ENCODE measurements at regions of chr3 and their contacts with region 1.

Region 1: DNA sequence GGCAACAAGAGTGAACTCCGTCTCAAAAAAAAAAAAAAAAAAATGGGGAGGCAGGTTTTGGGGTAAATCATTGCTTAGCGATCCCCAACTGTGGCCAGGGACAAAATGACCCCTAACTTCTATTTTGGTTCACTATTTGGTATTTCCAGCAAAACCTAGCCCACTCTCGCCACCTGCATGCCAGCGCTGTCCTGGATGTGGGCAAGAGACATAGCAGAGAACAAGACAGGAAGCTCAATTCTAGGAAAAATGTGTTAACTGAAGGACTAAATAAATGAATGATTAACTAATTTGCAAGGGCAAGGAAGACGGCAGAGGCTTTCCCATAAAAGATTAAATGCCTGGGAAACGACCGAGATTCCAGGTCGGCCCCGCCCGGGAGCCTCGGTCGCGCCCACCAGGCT is 425 bp downstream of the NICN1 start:
- DNase-seq: no peak
- ATAC-seq: peak; percentile 2
- H3K4me3 Mint-ChIP-seq: peak overlapping the region; percentile 84
- H3K27ac Mint-ChIP-seq: peak overlapping the region; percentile 93
- H3K4me1 Mint-ChIP-seq: peaks cover 16% of the 10 kb centered on the region
- H3K27me3 Mint-ChIP-seq: no peaks in the 10 kb centered on the region

Region 2: DNA sequence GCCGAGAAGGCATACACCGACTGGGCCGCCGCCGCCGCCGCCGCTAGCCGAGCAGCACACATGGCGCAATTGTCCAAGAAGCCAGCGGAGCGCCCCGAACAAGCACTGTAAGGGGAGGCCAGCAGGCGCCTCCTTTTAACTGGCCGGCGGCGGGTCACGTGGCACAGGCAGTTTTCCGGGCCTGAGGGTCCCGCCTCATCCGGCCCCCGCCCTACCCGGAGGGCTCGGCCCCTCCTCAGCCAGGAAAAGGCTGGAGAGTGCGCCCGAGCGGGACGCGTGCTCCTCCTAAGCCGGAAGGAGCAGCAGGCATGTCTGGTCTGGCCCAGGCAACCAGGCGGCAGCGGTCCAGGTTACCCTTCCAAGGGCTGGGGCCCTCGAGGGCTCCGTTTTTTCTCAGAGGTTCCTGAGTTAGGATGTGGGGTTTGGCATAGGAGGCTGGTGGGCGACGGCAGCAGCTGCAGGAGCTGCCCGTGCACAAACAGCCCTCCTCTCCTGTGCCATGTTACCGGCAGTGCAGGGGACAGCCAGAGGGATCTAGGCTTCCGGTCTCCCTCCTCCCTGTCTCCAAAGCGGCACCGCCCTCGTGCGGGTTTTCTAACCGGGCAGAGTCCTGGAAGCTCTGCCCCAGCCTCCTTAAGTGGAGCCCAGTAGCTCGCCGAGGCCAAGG is 70.3 kb before region 1 on chr3 and contains the start of gene GPX1:
- CTCF ChIA-PET with region 1: no interaction called
- POLR2A ChIA-PET with region 1: interaction called, 3 read pairs
- intact Hi-C with region 1: loop called in 1 of 2 experiments (anchors 1 kb)
- DNase-seq: peak; percentile 92
- ATAC-seq: peak; percentile 85
- H3K4me3 Mint-ChIP-seq: peak within 1 kb of the TSS; percentile 94
- H3K27ac Mint-ChIP-seq: peak within 1 kb of the TSS; percentile 98
- H3K4me1 Mint-ChIP-seq: peaks cover 18% of the 10 kb centered on the region
- H3K27me3 Mint-ChIP-seq: no peaks in the 10 kb centered on the region
- total RNA-seq, gene GPX1: 182 to 306 TPM

Region 3: DNA sequence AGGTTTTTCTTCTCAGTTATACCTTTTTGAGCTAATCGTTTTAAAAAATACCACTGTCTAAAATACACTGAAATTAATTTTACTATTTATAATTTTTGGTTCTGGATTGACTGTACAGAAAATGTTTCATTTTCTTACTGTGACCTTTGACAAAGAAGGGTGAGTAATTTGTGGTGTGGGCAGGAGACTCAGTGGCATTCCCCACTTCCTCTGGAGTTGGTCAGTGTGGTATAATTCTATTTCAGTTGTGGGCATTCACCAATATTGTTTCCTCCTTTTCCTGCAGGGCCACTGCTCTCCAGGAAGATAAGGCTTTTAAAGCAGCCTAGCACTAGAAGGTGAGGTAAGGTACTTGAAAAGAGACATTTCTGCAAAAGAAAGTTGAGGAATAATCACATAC is 47.9 kb after region 1 on chr3:
- CTCF ChIA-PET with region 1: no interaction called
- POLR2A ChIA-PET with region 1: no interaction called
- intact Hi-C with region 1: no loop called
- DNase-seq: peak; percentile 25
- ATAC-seq: peak; percentile 55
- H3K4me3 Mint-ChIP-seq: no peak overlapping the region
- H3K27ac Mint-ChIP-seq: no peak overlapping the region
- H3K4me1 Mint-ChIP-seq: peaks cover 21% of the 10 kb centered on the region
- H3K27me3 Mint-ChIP-seq: no peaks in the 10 kb centered on the region

Region 4: DNA sequence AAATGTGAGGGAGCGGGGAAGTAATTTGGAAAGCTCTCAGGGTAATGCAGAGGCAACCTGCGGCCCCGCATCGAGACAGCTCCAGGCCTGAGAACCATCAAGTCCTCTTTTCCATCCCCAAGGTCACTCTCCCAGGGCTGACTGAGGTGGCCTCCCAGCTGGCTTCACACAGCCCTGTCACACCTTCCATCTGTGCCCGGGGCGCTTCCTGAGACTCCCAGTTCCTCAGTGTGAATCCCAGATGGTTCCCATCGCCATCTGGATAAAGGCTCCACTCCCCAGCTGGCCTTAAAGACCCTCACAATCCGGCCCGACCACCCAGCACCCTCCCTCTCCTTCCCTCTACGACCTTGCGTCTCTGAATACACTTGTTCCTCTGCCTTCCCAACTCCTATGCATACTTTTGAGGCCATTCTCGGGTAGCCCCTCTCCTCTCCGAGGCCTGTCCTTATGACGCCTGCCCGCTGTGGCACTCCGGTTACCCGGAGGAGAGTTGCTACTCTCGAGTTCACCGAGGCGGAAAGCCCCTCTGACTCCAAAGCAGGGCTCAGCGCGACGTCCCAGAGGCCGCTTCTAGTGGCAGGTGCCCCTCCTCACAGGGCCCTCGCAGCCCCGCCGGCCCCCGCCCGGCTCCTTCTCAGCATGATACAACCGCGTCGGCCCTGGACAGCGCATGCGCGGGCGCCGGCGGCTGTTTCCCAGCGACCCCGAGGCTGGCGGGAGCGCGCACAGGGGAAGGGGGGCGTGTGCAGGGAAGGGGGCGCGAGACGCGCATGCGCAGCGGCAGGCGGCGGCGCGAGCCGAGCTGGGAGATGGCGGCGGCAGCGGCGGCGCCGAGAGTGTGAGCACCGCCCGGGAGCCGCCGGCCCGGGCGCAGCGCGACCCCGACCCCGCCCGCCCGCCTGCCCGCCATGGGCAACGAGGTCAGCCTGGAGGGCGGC is 125.3 kb after region 1 on chr3 and contains the start of gene BSN:
- CTCF ChIA-PET with region 1: no interaction called
- POLR2A ChIA-PET with region 1: no interaction called
- intact Hi-C with region 1: loop called in 1 of 2 experiments (anchors 1 kb)
- DNase-seq: peak; percentile 95
- ATAC-seq: peak; percentile 92
- H3K4me3 Mint-ChIP-seq: peak within 1 kb of the TSS; percentile 72
- H3K27ac Mint-ChIP-seq: peak within 1 kb of the TSS; percentile 24
- H3K4me1 Mint-ChIP-seq: peaks cover 11% of the 10 kb centered on the region
- H3K27me3 Mint-ChIP-seq: peaks cover 34% of the 10 kb centered on the region
- total RNA-seq, gene BSN: 0.09 to 0.11 TPM

Region 5: DNA sequence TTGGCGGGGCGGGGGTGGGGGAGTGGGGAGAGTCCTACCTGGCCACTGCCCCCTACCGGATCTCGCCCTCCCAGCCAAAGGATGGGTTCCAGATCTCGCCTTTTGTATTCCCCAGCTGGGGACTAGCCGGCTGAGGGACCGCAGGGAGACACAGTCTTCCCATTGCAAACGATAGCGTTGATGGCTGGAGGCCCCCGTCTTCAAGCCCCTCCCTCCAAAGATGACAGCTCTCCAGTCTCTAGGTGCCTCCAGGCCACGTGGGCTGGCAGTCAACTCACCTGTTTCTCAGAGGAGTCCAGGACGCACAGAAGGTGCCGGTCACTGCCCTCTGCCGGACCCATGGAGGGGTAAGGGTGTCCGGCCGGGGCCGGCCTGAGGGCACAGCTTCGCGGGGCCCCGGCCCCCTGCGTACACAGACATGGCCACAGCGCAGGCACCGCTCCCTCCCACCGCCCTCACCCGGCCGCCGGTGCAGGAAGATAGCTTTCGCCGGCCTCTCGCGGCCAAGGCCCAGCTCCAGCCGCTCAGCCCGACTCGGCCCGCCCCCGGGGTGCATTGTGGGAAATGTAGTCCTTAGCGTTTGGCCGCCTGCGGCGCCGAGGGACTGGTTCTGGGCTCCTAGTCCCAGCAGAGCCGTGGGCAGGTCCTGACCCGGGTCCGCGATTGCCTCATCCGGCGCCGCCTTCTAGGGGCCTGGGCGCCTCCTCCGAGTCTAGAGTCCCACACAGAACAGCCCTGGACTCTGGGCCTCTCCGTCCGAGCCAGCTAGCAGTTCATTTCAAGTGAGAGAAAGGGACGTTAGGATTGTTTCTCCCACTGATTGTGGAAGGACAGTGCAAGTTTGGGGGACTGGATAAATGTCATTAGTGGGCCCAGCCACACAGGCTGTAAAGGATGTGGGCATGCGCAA is 500.9 kb after region 1 on chr3 and contains the start of gene MON1A:
- CTCF ChIA-PET with region 1: no interaction called
- POLR2A ChIA-PET with region 1: no interaction called
- intact Hi-C with region 1: loop called in 1 of 2 experiments (anchors 1 kb)
- DNase-seq: peak; percentile 92
- ATAC-seq: peak; percentile 97
- H3K4me3 Mint-ChIP-seq: peak within 1 kb of the TSS; percentile 85
- H3K27ac Mint-ChIP-seq: peak within 1 kb of the TSS; percentile 90
- H3K4me1 Mint-ChIP-seq: peaks cover 19% of the 10 kb centered on the region
- H3K27me3 Mint-ChIP-seq: no peaks in the 10 kb centered on the region
- total RNA-seq, gene MON1A: 7.5 to 8.3 TPM